IMR-90 (cell line): ENCODE measurements at regions of chr6 and their contacts with region 1.

Region 1: GRCh38 chr6:52263709-52264540 is 19.6 kb upstream of the IL17F start:
- DNase-seq: peak; percentile 74
- ATAC-seq: peak; percentile 74
- H3K4me3 ChIP-seq: no peak overlapping the region
- H3K27ac ChIP-seq: no peak overlapping the region
- H3K4me1 ChIP-seq: peaks cover 12% of the 10 kb centered on the region; the same call in 1 of the 2 replicates
- H3K27me3 ChIP-seq: no peaks in the 10 kb centered on the region
- CTCF ChIP-seq: peak; percentile 96
- POLR2A ChIP-seq: no peak
- RAD21 ChIP-seq: peak; percentile 87

Region 2: DNA sequence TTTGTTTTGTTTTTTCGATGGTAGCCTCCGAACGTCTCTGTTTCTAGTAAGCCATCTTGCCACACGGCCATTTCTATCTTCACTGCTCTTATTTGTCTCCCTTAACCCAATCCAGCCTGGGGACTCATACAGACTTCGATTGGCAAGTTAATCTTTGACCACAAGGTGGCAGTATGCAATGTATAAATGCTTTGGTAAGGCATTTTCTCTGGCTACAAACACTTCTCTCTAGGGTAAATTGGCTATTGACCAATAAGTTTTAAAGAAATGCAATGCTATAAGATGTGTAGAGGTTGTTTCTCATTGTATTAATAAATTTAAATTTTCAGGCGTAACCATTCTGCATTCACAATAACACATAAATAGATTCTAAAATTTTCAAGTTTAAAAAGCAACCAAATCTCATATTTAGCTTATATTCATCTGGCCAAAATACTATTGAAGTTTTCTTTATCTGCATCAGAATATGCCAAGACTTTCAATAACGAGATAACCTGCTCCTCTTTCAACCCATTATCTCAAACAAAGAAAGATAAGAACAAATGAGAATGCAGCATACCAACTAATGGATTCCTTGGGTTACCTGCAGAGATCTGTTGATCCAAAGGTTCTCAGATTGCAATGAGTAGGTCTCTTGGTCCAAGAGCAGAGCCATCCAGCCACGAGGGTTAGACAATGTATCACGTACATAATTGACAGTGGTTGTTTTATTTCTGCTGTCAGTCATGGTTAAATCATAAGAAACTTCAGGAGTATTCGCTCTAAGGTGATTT is 408.4 kb before region 1 on chr6:
- CTCF ChIA-PET with region 1: no interaction called
- POLR2A ChIA-PET with region 1: no interaction called
- dilution Hi-C with region 1: no loop called
- in situ Hi-C with region 1: no loop called
- intact Hi-C with region 1: loop called (anchors 1 kb)
- DNase-seq: peak; percentile 67
- ATAC-seq: peak; percentile 54; the same call in 1 of the 2 replicates
- H3K4me3 ChIP-seq: no peak overlapping the region
- H3K27ac ChIP-seq: no peak overlapping the region
- H3K4me1 ChIP-seq: no peaks in the 10 kb centered on the region
- H3K27me3 ChIP-seq: no peaks in the 10 kb centered on the region
- CTCF ChIP-seq: peak; percentile 61
- POLR2A ChIP-seq: no peak
- RAD21 ChIP-seq: peak; percentile 40

Region 3: GRCh38 chr6:52063584-52064344 is 200.2 kb before region 1 on chr6:
- CTCF ChIA-PET with region 1: no interaction called
- POLR2A ChIA-PET with region 1: no interaction called
- dilution Hi-C with region 1: no loop called
- in situ Hi-C with region 1: no loop called
- intact Hi-C with region 1: loop called (anchors 1 kb)
- DNase-seq: peak; percentile 30
- ATAC-seq: peak; percentile 54; the same call in 1 of the 2 replicates
- H3K4me3 ChIP-seq: no peak overlapping the region
- H3K27ac ChIP-seq: no peak overlapping the region
- H3K4me1 ChIP-seq: no peaks in the 10 kb centered on the region
- H3K27me3 ChIP-seq: no peaks in the 10 kb centered on the region
- CTCF ChIP-seq: peak; percentile 45
- POLR2A ChIP-seq: no peak
- RAD21 ChIP-seq: peak; percentile 18; the same call in 1 of the 2 replicates

Region 4: DNA sequence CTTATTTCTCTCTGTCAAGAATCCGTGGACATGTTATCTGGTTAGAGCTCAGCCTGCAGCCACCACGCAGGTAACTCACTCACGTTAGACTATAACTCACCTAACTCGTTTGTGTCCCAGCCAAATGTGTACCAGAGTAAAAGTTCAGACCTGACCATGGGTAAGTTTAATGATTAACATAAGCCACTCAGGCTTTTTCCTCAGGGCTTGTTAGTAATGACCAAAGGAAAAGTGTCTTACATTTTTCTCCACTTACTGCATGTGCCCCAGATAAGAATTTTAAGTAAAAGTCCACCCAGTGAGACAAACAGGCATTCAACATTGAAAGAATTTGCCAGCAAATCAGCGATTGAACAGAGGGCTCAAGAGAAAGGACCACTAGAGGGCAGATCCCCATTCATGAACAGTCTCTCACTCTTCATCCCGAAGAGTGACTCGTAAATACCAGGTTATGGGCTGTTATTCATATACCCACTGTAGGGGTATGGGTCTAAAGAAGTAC is 176.4 kb before region 1 on chr6 and contains the start of gene PKHD1:
- CTCF ChIA-PET with region 1: no interaction called
- POLR2A ChIA-PET with region 1: no interaction called
- dilution Hi-C with region 1: no loop called
- in situ Hi-C with region 1: no loop called
- intact Hi-C with region 1: loop called (anchors 1 kb)
- DNase-seq: peak; percentile 13
- ATAC-seq: peak; percentile 27; the same call in 1 of the 2 replicates
- H3K4me3 ChIP-seq: no peak within 1 kb of the TSS
- H3K27ac ChIP-seq: no peak within 1 kb of the TSS
- H3K4me1 ChIP-seq: no peaks in the 10 kb centered on the region
- H3K27me3 ChIP-seq: no peaks in the 10 kb centered on the region
- CTCF ChIP-seq: peak; percentile 31
- POLR2A ChIP-seq: no peak
- RAD21 ChIP-seq: 0 out of 2 replicates have a peak, but pooled peaks have one; percentile 6
- total RNA-seq, gene PKHD1: not detected in 2 replicates

Region 5: GRCh38 chr6:52104780-52105378 is 159.0 kb before region 1 on chr6:
- CTCF ChIA-PET with region 1: no interaction called
- POLR2A ChIA-PET with region 1: no interaction called
- dilution Hi-C with region 1: no loop called
- in situ Hi-C with region 1: no loop called
- intact Hi-C with region 1: loop called (anchors 2 kb)
- DNase-seq: no peak
- ATAC-seq: no peak
- H3K4me3 ChIP-seq: no peak overlapping the region
- H3K27ac ChIP-seq: no peak overlapping the region
- H3K4me1 ChIP-seq: no peaks in the 10 kb centered on the region
- H3K27me3 ChIP-seq: no peaks in the 10 kb centered on the region
- CTCF ChIP-seq: no peak
- POLR2A ChIP-seq: no peak
- RAD21 ChIP-seq: no peak

Region 6: GRCh38 chr6:52115891-52116604 is 147.9 kb before region 1 on chr6:
- CTCF ChIA-PET with region 1: no interaction called
- POLR2A ChIA-PET with region 1: no interaction called
- dilution Hi-C with region 1: no loop called
- in situ Hi-C with region 1: no loop called
- intact Hi-C with region 1: no loop called
- DNase-seq: no peak
- ATAC-seq: no peak
- H3K4me3 ChIP-seq: no peak overlapping the region
- H3K27ac ChIP-seq: no peak overlapping the region
- H3K4me1 ChIP-seq: no peaks in the 10 kb centered on the region
- H3K27me3 ChIP-seq: no peaks in the 10 kb centered on the region
- CTCF ChIP-seq: no peak
- POLR2A ChIP-seq: no peak
- RAD21 ChIP-seq: no peak

Region 7: GRCh38 chr6:52162940-52163908 is 100.7 kb before region 1 on chr6:
- CTCF ChIA-PET with region 1: interaction called, 4 read pairs
- POLR2A ChIA-PET with region 1: no interaction called
- dilution Hi-C with region 1: no loop called
- in situ Hi-C with region 1: loop called (anchors 5 kb)
- intact Hi-C with region 1: loop called (anchors 1 kb)
- DNase-seq: peak; percentile 30
- ATAC-seq: peak; percentile 53; the same call in 1 of the 2 replicates
- H3K4me3 ChIP-seq: no peak overlapping the region
- H3K27ac ChIP-seq: no peak overlapping the region
- H3K4me1 ChIP-seq: no peaks in the 10 kb centered on the region
- H3K27me3 ChIP-seq: no peaks in the 10 kb centered on the region; the same call in 1 of the 2 replicates
- CTCF ChIP-seq: peak; percentile 72
- POLR2A ChIP-seq: no peak
- RAD21 ChIP-seq: peak; percentile 71

Region 8: DNA sequence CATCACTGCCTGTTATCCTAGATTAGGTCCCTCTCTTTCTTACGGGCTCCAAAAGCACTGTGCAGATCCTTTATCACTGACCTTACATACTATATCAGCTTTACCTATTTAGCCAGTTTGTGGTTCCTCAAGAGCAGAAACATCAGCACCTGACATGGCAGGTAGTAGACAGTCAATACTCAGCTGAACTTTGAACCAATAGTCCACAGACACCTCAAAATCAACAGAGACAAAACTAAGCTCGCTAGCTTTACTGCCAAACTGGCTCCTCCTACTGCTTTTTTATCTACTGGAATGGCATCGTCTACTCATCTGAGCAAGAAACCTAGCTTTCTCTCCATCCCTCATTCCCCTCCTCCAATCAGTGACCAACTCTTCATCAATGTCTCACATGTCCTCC is 72.1 kb before region 1 on chr6:
- CTCF ChIA-PET with region 1: no interaction called
- POLR2A ChIA-PET with region 1: no interaction called
- dilution Hi-C with region 1: no loop called
- in situ Hi-C with region 1: no loop called
- intact Hi-C with region 1: no loop called
- DNase-seq: no peak
- ATAC-seq: no peak
- H3K4me3 ChIP-seq: no peak overlapping the region
- H3K27ac ChIP-seq: no peak overlapping the region
- H3K4me1 ChIP-seq: no peaks in the 10 kb centered on the region
- H3K27me3 ChIP-seq: no peaks in the 10 kb centered on the region
- CTCF ChIP-seq: no peak
- POLR2A ChIP-seq: no peak
- RAD21 ChIP-seq: no peak

Region 9: GRCh38 chr6:52482903-52483670 is 219.2 kb after region 1 on chr6:
- CTCF ChIA-PET with region 1: no interaction called
- POLR2A ChIA-PET with region 1: no interaction called
- dilution Hi-C with region 1: no loop called
- in situ Hi-C with region 1: no loop called
- intact Hi-C with region 1: no loop called
- DNase-seq: peak; percentile 51
- ATAC-seq: peak; percentile 76
- H3K4me3 ChIP-seq: no peak overlapping the region
- H3K27ac ChIP-seq: no peak overlapping the region
- H3K4me1 ChIP-seq: no peaks in the 10 kb centered on the region; the same call in 1 of the 2 replicates
- H3K27me3 ChIP-seq: no peaks in the 10 kb centered on the region
- CTCF ChIP-seq: no peak
- POLR2A ChIP-seq: no peak
- RAD21 ChIP-seq: no peak

Region 10: DNA sequence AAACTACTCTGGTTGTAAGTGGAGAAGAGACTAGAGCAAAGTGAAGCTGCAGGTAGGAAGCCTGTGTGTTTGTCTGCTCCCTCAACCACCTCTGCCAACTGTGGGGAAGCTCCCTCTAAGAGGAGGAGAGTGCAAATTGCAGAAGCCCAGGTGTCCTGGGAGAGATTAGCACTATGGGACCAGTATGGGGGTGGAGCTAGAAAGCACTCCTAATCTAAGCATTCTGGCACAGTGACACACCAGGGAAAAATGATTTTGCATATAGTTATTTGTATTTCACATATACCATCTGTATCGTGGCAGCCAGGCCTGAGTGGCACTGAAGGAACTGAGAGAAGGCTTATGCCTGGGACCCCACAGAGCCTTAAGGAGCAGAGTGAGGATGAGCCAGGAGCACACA is 526.9 kb after region 1 on chr6:
- CTCF ChIA-PET with region 1: no interaction called
- POLR2A ChIA-PET with region 1: no interaction called
- dilution Hi-C with region 1: no loop called
- in situ Hi-C with region 1: no loop called
- intact Hi-C with region 1: no loop called
- DNase-seq: no peak
- ATAC-seq: peak; percentile 38
- H3K4me3 ChIP-seq: no peak overlapping the region
- H3K27ac ChIP-seq: no peak overlapping the region
- H3K4me1 ChIP-seq: peaks cover 9% of the 10 kb centered on the region
- H3K27me3 ChIP-seq: peaks cover 1% of the 10 kb centered on the region; the same call in 1 of the 2 replicates
- CTCF ChIP-seq: no peak
- POLR2A ChIP-seq: no peak
- RAD21 ChIP-seq: no peak